Endothelial cell of umbilical vein (primary cell): ENCODE measurements at regions of chr12 and their contacts with region 1.

Region 1: GRCh38 chr12:14185427-14186192 is 179.9 kb upstream of the ATF7IP start:
- DNase-seq: peak; percentile 35
- H3K4me3 ChIP-seq: no peak overlapping the region
- H3K27ac ChIP-seq: no peak overlapping the region
- H3K4me1 ChIP-seq: no peaks in the 10 kb centered on the region
- H3K27me3 ChIP-seq: no peaks in the 10 kb centered on the region
- CTCF ChIP-seq: peak; percentile 50 to 72
- POLR2A ChIP-seq: no peak

Region 2: DNA sequence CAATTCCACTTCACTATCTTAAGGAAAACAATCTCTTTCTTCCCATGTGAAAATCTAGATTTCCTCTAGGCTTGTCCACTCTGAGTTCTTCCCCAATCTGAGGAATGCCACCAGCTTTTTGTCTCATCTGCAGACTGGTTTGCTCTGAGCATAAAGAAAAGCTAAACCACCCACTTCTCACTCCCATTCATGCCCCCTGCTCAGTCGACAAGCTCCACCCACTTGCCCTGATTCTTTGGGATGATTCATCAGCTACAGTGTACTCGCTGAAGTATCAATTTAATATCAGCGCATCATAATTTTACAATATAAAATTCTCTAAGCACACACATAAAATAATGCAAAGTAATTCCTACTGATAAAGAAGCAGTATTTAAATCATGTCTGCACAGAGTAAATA is 413.3 kb before region 1 on chr12:
- CTCF ChIA-PET with region 1: no interaction called
- POLR2A ChIA-PET with region 1: no interaction called
- dilution Hi-C with region 1: no loop called
- intact Hi-C with region 1: no loop called
- DNase-seq: no peak
- H3K4me3 ChIP-seq: no peak overlapping the region
- H3K27ac ChIP-seq: no peak overlapping the region
- H3K4me1 ChIP-seq: no peaks in the 10 kb centered on the region
- H3K27me3 ChIP-seq: no peaks in the 10 kb centered on the region
- CTCF ChIP-seq: no peak
- POLR2A ChIP-seq: no peak

Region 3: GRCh38 chr12:14175206-14175605 is 10.4 kb before region 1 on chr12:
- CTCF ChIA-PET with region 1: interaction called, 15 read pairs
- POLR2A ChIA-PET with region 1: no interaction called
- dilution Hi-C with region 1: no loop called
- intact Hi-C with region 1: no loop called
- DNase-seq: no peak
- H3K4me3 ChIP-seq: no peak overlapping the region
- H3K27ac ChIP-seq: no peak overlapping the region
- H3K4me1 ChIP-seq: no peaks in the 10 kb centered on the region
- H3K27me3 ChIP-seq: no peaks in the 10 kb centered on the region
- CTCF ChIP-seq: no peak
- POLR2A ChIP-seq: no peak

Region 4: DNA sequence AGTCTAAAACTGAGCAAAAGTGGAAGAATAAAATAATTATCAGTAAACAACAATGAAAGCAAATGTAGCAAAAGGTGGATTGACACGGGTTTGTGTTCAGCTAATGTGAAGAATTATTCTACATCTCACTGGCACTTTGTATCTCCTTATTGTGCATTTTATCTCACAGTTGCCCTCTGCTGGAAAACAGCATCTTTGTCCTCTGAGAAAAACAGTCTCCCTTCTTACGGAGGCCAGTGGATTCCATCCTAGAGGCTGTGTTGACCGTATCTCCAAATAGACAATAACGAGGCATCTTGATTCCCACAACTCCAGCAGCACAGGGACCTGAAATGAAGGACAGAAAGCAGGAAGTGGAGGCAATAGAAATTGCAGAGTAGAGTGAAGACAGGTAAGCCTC is 433.4 kb after region 1 on chr12:
- CTCF ChIA-PET with region 1: interaction called, 4 read pairs
- POLR2A ChIA-PET with region 1: no interaction called
- dilution Hi-C with region 1: no loop called
- intact Hi-C with region 1: loop called (anchors 5 kb)
- DNase-seq: peak; percentile 19
- H3K4me3 ChIP-seq: no peak overlapping the region
- H3K27ac ChIP-seq: no peak overlapping the region
- H3K4me1 ChIP-seq: no peaks in the 10 kb centered on the region
- H3K27me3 ChIP-seq: peaks cover 0 to 1% of the 10 kb centered on the region in 2 experiments
- CTCF ChIP-seq: peak in 1 of 2 donors; percentile 17
- POLR2A ChIP-seq: no peak